Colonic mucosa (tissue), 4 donors: ENCODE measurements at regions of chr1 and their contacts with region 1.

Region 1: DNA sequence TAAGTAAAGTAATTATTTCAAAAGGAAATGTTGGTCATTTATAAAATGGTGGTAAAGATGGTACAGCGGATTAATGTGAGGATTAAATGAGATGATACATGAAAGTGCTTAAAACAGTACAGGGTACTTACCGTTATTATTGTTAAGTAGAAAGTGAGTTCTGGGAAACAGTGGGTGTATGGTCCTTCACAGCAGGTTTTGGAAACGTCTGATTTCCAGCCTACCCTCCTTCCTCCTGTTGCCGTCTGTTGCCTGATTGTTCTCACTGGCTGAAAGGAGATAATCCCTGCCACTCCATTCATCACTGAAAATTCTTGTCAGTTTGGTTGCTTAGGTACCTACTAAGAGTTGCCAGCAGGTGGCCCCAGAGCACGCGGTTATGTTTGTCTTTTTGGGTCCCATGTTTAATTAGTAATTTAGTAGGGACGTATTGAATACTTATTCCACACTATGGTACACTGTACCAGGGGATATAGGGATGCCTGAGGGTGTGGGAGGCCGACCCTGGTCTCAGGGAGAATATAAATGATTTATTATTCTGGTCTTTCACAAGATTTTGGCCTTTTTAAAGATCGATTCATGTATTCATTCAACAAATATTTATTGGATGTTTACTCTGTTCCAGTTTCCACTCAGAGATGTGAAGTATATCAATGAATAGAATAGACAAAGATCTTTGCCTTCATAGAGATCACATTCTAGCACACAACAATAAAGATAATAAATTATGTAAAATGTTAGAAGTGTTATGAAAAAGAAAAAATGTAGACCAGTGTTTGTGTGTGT is 30.8 kb upstream of the RPTN start:
- DNase-seq: peak; percentile 54
- H3K4me3 ChIP-seq: peak overlapping the region; percentile 51
- H3K27ac ChIP-seq: no peak overlapping the region
- H3K4me1 ChIP-seq: no peaks in the 10 kb centered on the region
- H3K27me3 ChIP-seq: peaks cover 9% of the 10 kb centered on the region
- CTCF ChIP-seq: peak; percentile 60

Region 2: GRCh38 chr1:152052606-152053005 is 137.2 kb before region 1 on chr1:
- intact Hi-C with region 1: loop called (anchors 2 kb)
- DNase-seq: peak; percentile 89
- H3K4me3 ChIP-seq: no peak overlapping the region
- H3K27ac ChIP-seq: no peak overlapping the region
- H3K4me1 ChIP-seq: no peaks in the 10 kb centered on the region
- H3K27me3 ChIP-seq: no peaks in the 10 kb centered on the region
- CTCF ChIP-seq: peak; percentile 92

Region 3: GRCh38 chr1:152141974-152142584 is 47.8 kb before region 1 on chr1:
- intact Hi-C with region 1: loop called (anchors 5 kb)
- DNase-seq: peak; percentile 55
- H3K4me3 ChIP-seq: no peak overlapping the region
- H3K27ac ChIP-seq: no peak overlapping the region
- H3K4me1 ChIP-seq: no peaks in the 10 kb centered on the region
- H3K27me3 ChIP-seq: peaks cover 6% of the 10 kb centered on the region
- CTCF ChIP-seq: peak; percentile 58

Region 4: DNA sequence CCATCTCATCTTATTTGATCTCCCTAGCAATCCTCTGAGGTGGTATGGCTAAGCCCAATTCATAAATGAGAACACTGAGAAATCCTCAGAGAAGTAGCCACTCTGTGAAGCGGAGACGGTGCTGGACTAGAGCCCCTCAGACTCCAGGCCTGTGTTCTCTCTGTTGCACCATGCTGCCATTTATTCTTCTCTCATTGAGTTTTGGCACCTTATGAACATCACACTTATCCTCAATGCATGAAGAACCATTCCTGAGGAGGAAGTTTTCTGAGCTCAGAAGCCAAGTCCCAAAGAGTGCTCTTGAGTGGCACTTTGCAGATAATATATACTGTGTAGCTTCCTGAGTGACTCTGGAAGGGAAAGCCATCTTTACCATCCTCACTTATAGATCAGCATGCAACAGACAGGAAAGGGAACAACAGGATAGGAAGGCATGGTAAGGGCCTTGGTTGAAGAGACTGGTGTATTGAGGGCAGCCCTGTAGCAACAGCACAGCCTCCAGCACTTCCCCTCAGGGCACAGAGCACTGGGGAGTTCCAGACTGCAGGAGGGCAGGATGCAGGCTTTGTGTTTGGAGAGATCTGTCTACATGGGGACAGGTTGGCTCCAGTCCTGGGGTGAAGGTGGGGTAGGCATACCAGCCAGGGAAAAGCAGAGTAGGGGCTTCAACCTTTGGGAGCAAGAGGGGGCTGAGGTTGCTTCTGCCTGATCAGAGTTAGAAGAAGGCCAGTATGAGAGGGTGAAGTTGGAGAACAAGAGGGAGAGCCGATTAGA is 225.8 kb after region 1 on chr1:
- intact Hi-C with region 1: no loop called
- DNase-seq: no peak
- H3K4me3 ChIP-seq: no peak overlapping the region
- H3K27ac ChIP-seq: no peak overlapping the region
- H3K4me1 ChIP-seq: no peaks in the 10 kb centered on the region
- H3K27me3 ChIP-seq: no peaks in the 10 kb centered on the region
- CTCF ChIP-seq: no peak

Region 5: DNA sequence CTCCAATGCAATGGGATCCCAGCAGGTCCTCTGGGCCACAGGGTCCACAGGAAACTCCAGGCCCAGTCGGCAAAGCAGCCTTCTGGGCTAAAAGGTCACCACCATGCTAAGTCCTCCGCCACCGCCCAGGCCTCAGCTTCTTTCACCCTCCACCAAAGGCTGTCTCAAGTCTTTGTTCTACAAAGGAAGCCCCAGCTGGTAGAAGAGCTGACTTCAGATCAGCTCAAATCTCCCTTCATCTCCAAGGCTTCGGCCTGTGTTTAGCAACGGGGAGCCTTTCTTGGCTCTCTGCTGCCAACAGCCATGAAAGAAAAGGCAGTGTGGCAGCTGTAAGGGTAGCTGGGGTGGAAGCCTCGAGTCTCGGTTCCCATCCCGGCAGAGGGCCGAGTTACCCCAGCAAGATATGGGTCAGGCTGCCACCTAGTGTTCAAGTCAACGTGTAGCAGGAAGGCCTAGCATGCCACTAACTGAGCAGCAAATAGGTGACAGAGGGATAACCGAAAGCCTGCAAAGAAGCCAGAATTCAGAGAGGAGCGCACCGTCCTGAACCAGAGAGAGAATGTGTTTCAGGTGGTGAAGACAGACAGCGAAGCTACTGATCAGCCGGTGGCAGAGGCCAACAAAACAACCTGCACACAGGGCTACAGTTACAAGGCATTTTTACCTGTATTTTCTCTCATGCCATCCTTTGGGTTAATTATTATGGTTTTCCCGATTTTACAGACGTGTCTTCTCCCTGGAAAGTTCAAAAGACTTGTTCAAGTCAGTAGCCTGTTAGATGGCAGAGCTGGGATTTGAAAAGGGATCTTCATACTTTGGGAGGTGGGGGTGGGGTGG is 251.0 kb after region 1 on chr1:
- intact Hi-C with region 1: loop called (anchors 2 kb)
- DNase-seq: peak; percentile 61
- H3K4me3 ChIP-seq: no peak overlapping the region
- H3K27ac ChIP-seq: no peak overlapping the region
- H3K4me1 ChIP-seq: no peaks in the 10 kb centered on the region
- H3K27me3 ChIP-seq: no peaks in the 10 kb centered on the region
- CTCF ChIP-seq: peak; percentile 73

Region 6: GRCh38 chr1:152459596-152460528 is 270.0 kb after region 1 on chr1:
- intact Hi-C with region 1: loop called (anchors 5 kb)
- DNase-seq: peak; percentile 69
- H3K4me3 ChIP-seq: no peak overlapping the region
- H3K27ac ChIP-seq: no peak overlapping the region
- H3K4me1 ChIP-seq: no peaks in the 10 kb centered on the region
- H3K27me3 ChIP-seq: no peaks in the 10 kb centered on the region
- CTCF ChIP-seq: peak; percentile 69